Colonic mucosa (tissue), 4 donors: ENCODE measurements at regions of chr1 and their contacts with region 1.

Region 1: DNA sequence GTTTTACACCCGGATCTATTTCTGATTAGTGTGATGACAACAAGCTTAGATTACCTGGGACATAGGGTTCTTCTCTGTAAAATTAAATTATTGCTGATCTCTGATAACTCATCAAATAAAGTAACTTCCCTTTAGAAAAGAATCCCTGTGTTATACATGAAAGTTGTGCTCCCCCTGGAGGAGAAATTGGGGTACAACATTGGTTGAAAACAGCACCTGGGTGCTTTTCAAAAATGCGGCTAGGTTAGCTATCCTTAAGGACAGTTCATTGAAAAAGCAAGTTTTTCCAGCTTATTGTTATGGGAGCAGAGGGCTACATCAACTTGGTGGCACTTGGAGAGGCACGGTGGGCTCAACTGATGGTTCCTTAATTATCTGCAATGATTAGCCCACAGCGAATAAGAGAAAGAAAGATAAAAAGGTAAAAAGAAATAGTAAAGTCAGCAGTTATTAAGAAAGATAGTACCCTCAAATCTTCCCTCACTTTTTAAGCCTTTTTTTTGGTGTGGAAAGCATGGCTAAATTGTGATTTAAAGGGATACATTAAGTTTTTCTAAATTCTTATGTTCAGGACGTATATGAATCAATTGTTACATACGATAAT is 97.8 kb downstream of the FMN2 start:
- DNase-seq: peak; percentile 55
- H3K4me3 ChIP-seq: no peak overlapping the region
- H3K27ac ChIP-seq: no peak overlapping the region
- H3K4me1 ChIP-seq: no peaks in the 10 kb centered on the region
- H3K27me3 ChIP-seq: no peaks in the 10 kb centered on the region
- CTCF ChIP-seq: peak; percentile 77

Region 2: DNA sequence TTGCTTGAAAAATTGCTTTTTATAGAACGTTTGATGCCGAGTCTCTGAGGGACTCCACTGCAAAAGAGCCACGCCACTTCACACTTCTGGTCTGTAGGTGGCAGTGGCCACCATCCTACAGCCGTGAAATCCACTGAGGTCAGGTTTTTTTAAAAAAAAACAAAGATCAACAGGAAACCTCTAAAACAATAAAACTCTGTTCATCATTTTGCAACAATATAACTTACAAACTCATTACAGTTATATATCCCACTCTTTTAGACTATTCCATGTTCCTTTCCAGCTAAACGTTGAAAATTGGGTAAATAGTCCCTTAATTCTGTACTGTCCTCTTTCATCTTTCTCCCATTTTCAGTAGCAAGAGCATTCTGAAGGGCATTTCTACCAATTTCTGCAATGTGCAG is 162.4 kb before region 1 on chr1:
- intact Hi-C with region 1: loop called (anchors 10 kb)
- DNase-seq: peak; percentile 43
- H3K4me3 ChIP-seq: no peak overlapping the region
- H3K27ac ChIP-seq: no peak overlapping the region
- H3K4me1 ChIP-seq: no peaks in the 10 kb centered on the region
- H3K27me3 ChIP-seq: no peaks in the 10 kb centered on the region
- CTCF ChIP-seq: peak; percentile 92

Region 3: GRCh38 chr1:240474133-240474614 is 284.7 kb after region 1 on chr1:
- intact Hi-C with region 1: loop called (anchors 10 kb)
- DNase-seq: no peak
- H3K4me3 ChIP-seq: no peak overlapping the region
- H3K27ac ChIP-seq: no peak overlapping the region
- H3K4me1 ChIP-seq: no peaks in the 10 kb centered on the region
- H3K27me3 ChIP-seq: no peaks in the 10 kb centered on the region
- CTCF ChIP-seq: no peak

Region 4: GRCh38 chr1:240602189-240602588 is 412.7 kb after region 1 on chr1:
- intact Hi-C with region 1: loop called (anchors 5 kb)
- DNase-seq: no peak
- H3K4me3 ChIP-seq: no peak overlapping the region
- H3K27ac ChIP-seq: no peak overlapping the region
- H3K4me1 ChIP-seq: no peaks in the 10 kb centered on the region
- H3K27me3 ChIP-seq: no peaks in the 10 kb centered on the region
- CTCF ChIP-seq: no peak

Region 5: DNA sequence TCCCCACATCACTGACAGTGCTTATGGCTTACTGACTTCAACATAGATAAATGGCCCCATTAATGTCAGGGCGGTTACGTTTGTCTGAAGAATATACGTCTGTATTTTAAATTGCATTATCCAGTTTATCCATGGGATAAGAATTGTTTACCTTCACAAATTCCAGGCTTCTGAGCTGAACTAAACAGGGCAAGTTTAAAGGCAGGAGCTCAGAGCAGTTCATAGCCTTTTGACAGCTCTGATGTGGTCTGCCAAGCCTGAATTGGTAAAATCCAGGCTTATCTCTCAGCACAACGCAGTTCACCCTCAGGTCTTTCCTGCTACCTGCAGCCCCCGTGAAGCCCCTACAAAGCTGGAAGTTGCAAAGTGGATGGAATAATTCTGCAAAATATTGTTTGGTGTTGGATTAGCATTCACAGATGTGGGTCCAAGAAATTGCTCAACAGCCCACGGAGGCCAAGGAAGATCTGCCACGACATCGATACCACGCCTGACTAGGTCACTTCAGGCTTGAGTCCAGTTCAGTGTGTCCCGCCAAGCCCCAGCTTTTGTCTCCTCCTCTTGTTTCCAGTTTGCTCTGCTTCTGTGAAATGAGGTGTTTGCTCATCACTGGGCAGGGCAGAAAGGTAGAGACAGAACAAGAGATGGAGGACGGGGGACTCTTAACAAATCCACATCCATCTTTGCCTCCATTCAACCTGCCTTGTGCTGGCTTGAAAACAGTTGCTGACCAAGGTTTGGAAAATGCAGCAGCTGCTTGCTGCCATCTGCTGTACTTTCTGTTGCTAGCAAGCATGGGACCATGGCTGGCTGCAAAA is 502.2 kb after region 1 on chr1:
- intact Hi-C with region 1: loop called (anchors 5 kb)
- DNase-seq: peak; percentile 35
- H3K4me3 ChIP-seq: no peak overlapping the region
- H3K27ac ChIP-seq: no peak overlapping the region
- H3K4me1 ChIP-seq: no peaks in the 10 kb centered on the region
- H3K27me3 ChIP-seq: no peaks in the 10 kb centered on the region
- CTCF ChIP-seq: peak; percentile 38